PC-3 (cell line): ENCODE measurements at regions of chr17 and their contacts with region 1.

Region 1: DNA sequence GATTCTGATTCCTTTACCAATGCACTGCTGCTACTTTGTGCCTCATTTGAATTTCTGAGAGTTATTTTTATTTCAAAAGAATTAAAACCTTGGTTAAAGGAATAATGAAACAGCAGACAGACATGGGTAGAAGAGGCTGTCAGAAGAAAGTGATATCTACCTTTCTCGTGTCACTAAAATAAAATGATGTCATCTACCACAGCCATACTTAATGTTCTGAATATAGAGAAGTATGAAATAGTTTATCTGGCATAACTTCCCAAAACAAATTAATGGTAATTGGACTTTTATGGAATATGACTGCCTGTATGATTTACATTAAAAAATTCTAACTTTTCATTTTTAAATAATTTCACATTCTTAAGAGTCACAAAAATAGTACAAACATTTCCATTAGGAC is 52.5 kb downstream of the EFCAB13 start:
- DNase-seq: no peak
- ATAC-seq: no peak
- H3K4me3 ChIP-seq: no peak overlapping the region
- H3K27ac ChIP-seq: no peak overlapping the region
- H3K4me1 ChIP-seq: no peaks in the 10 kb centered on the region
- H3K27me3 ChIP-seq: no peaks in the 10 kb centered on the region
- CTCF ChIP-seq: no peak

Region 2: GRCh38 chr17:47400333-47400732 is 24.1 kb after region 1 on chr17:
- CTCF ChIA-PET with region 1: no interaction called
- POLR2A ChIA-PET with region 1: interaction called, 12 read pairs
- intact Hi-C with region 1: no loop called
- DNase-seq: no peak
- ATAC-seq: no peak
- H3K4me3 ChIP-seq: no peak overlapping the region
- H3K27ac ChIP-seq: no peak overlapping the region
- H3K4me1 ChIP-seq: no peaks in the 10 kb centered on the region
- H3K27me3 ChIP-seq: no peaks in the 10 kb centered on the region
- CTCF ChIP-seq: no peak

Region 3: GRCh38 chr17:47427985-47428384 is 51.7 kb after region 1 on chr17:
- CTCF ChIA-PET with region 1: no interaction called
- POLR2A ChIA-PET with region 1: no interaction called
- intact Hi-C with region 1: no loop called
- DNase-seq: no peak
- ATAC-seq: no peak
- H3K4me3 ChIP-seq: no peak overlapping the region
- H3K27ac ChIP-seq: no peak overlapping the region
- H3K4me1 ChIP-seq: no peaks in the 10 kb centered on the region
- H3K27me3 ChIP-seq: no peaks in the 10 kb centered on the region
- CTCF ChIP-seq: no peak